ENCODE measurements at regions of chr2 and their contacts with region 1.

Region 1: GRCh38 chr2:43239981-43240761 is 13.8 kb upstream of the ZFP36L2 start:
- DNase-seq: no peak

Region 2: DNA sequence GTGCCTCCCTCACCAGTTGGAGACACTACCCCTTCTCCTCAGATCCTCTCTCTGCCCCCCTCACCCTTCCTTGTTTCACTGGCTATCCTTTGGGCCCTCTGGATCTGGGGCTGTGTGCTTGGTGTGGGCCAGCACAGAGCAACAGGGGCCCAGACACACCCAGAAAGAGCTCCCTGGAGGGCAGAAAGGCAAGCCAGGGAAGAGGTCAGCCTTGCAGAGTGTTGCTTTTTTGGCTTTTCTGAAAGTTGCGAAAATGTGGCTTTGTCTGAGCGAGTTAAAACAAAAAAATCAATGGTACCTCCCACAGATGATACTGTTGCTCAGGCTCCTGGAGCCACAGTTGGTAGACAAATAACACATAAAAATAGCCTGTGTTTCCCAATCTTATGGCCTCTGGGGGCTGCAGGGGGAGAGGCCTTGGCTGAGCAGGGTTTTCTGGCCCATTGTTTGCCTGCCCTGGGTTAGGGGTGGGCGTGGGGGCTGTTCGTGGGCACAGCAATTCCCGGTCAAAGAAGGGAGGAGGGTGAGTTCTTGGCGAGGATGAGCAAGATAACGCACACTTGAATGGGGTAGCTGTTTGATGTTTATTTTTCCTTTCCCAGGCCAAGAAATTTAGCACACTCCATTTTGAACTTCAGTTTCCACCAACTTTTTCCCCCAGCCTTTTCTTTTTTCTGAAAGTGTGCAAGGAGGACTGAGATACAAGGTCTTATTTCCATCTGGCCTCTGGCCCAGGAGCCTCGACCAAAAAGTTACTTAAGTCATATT is 280.8 kb before region 1 on chr2:
- intact Hi-C with region 1: loop called (anchors 10 kb)
- DNase-seq: no peak

Region 3: DNA sequence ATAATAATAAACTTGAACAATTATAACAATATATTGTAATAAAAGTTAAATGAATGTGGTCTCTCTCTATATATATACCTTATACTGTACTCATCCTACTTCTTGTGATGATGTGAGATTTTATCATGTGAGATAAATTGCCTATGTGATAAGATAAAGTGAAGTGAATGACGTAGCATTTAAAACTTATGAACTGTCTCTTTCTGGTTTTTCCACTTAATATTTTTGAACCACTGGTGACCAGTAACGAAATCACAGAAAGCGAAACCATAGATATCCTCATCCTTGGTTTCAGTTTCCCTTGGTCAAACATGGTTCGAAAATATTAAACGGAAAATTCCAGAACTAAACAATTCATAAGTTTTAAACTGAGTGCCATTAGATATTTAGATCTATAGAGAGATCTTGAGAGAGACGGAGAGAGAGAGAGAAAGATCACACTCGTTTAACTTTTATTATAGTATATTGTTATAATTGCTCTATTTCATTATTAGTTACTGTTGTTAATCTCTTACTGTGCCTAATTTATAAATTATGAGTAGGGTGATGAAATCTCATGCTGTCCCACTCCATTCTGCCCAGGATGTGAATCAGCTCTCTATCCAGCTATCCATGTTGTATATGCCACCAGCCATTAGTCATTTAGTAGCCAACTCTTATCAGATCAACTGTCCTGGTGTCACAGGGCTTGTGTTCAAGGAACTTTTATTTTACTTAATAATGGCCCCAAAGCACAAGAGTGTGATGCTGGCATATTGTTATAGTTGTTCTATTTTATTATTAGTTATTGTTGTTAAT is 198.9 kb after region 1 on chr2:
- intact Hi-C with region 1: no loop called
- DNase-seq: no peak

Region 4: GRCh38 chr2:43653506-43653905 is 413.3 kb after region 1 on chr2:
- intact Hi-C with region 1: no loop called
- DNase-seq: no peak